SK-N-SH (cell line): ENCODE measurements at regions of chr15 and their contacts with region 1.

Region 1: GRCh38 chr15:74768771-74769342 is 13.0 kb upstream of the CSK start:
- DNase-seq: peak; percentile 84
- H3K4me3 ChIP-seq: no peak overlapping the region; a peak in 1 of 4 replicates
- H3K27ac ChIP-seq: no peak overlapping the region
- H3K4me1 ChIP-seq: peaks cover 0 to 5% of the 10 kb centered on the region in 2 experiments; a peak in 1 of 4 replicates
- H3K27me3 ChIP-seq: peaks cover 8% of the 10 kb centered on the region; the same call in 1 of the 2 replicates
- CTCF ChIP-seq: peak; percentile 87
- EP300 ChIP-seq: no peak
- RAD21 ChIP-seq: peak; percentile 88

Region 2: DNA sequence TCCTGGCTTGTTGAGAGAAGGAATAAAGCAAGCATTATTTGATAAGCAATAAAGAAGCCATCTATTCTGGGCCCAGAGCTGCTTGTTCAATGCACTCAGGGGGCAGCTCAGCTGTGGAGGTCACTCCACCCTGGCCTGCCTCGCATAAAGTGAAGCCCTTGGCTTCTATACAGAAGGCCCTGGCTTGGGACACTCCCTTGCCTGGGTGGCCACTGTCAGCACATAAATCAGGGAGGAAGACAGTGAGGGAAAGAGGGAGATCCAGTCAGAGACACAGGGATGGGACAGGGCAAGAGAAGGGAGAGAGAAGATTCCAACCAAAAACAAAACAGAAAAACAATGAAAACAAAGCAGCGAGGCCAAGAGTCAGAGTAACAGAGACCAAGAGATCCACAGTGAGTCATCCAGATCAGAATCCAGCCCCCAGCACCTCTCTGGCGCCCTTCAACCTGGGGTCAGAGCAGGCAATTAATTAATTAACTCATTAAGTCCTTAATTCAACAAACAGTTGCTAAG is 1027.5 kb before region 1 on chr15:
- CTCF ChIA-PET with region 1: no interaction called
- POLR2A ChIA-PET with region 1: no interaction called
- DNase-seq: no peak
- H3K4me3 ChIP-seq: no peak overlapping the region
- H3K27ac ChIP-seq: no peak overlapping the region
- H3K4me1 ChIP-seq: peaks cover 7 to 29% of the 10 kb centered on the region in 2 experiments; a peak in 1 of 4 replicates
- H3K27me3 ChIP-seq: no peaks in the 10 kb centered on the region
- CTCF ChIP-seq: no peak
- EP300 ChIP-seq: no peak
- RAD21 ChIP-seq: no peak

Region 3: GRCh38 chr15:74635228-74635627 is 133.6 kb before region 1 on chr15:
- CTCF ChIA-PET with region 1: interaction called, 1,109 read pairs
- POLR2A ChIA-PET with region 1: interaction called, 15 read pairs
- DNase-seq: peak; percentile 74
- H3K4me3 ChIP-seq: no peak overlapping the region
- H3K27ac ChIP-seq: no peak overlapping the region
- H3K4me1 ChIP-seq: no peaks in the 10 kb centered on the region
- H3K27me3 ChIP-seq: no peaks in the 10 kb centered on the region
- CTCF ChIP-seq: peak; percentile 92
- EP300 ChIP-seq: no peak
- RAD21 ChIP-seq: peak; percentile 94

Region 4: DNA sequence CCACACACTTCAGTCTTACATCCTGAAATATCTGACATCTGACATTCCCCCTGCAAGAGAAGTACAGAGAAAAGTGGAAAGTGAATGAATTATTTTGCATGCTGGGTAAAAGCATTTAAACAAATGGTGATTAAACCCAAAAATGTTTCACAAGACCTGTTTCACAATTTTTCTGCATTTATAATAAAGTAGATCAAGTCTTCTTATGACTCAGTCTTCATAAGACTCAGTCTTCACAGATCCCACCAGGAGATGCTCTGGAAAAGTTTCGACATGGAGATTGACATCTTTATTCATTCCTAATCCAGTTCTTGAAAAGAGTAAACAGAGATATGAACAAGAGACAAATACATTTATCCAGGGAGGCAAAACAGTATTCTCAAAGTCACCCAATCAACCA is 59.8 kb before region 1 on chr15:
- CTCF ChIA-PET with region 1: interaction called, 11 read pairs
- POLR2A ChIA-PET with region 1: no interaction called
- DNase-seq: no peak
- H3K4me3 ChIP-seq: no peak overlapping the region
- H3K27ac ChIP-seq: no peak overlapping the region
- H3K4me1 ChIP-seq: no peaks in the 10 kb centered on the region
- H3K27me3 ChIP-seq: peaks cover 22% of the 10 kb centered on the region; the same call in 1 of the 2 replicates
- CTCF ChIP-seq: no peak
- EP300 ChIP-seq: no peak
- RAD21 ChIP-seq: no peak

Region 5: DNA sequence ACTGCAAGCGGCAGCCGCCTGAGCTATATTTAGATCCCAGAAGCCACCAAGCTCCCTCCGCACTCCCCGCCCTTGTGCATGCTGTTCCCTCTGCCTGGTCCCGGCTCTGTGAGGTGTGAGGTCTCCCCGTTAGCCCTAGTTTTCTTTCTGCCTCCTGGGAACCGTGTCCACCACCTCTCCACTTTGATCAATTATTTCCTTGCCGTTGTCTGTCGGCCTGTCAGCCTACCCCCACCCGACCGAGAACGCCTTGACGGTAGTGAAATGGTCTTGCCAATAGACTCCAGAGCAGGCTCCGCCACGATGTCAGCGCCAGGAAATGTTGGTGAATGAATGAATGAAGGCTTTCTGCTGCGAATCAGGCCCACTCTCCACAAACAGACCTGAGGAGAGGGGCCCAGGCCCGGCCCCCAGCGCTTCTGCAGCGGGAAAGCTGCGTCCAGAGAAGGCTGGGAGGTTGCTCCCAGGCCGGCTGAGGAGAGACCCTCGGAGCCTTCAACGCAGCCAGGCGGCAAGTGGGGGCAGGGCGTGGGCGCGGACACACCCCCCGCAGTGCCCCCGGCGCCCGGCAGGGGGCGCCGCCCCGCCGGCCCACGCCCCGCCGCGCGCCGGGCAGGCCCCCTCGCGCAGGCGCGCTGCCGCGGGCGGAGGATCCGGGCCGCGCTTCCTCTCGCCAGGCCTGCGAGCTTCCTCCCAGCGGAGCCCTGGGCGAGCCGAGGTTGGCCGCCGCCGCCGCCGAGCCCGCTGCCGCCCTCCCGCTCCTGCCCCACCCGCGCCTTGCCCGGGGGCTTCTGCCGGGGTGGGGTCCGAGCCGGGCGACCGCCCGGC is 12.8 kb after region 1 on chr15 and contains the start of gene CSK:
- CTCF ChIA-PET with region 1: interaction called, 161 read pairs
- POLR2A ChIA-PET with region 1: interaction called, 4 read pairs
- DNase-seq: peak; percentile 99
- H3K4me3 ChIP-seq: peak within 1 kb of the TSS; percentile 85 to 97
- H3K27ac ChIP-seq: peak within 1 kb of the TSS in 1 of 2 experiments; percentile 76; a peak in 2 of 4 replicates
- H3K4me1 ChIP-seq: peaks cover 10 to 46% of the 10 kb centered on the region in 2 experiments; a peak in 2 of 4 replicates
- H3K27me3 ChIP-seq: no peaks in the 10 kb centered on the region
- CTCF ChIP-seq: peak; percentile 48
- EP300 ChIP-seq: no peak
- RAD21 ChIP-seq: no peak
- polyA plus RNA-seq, gene CSK: 34.7 and 53.1 TPM in 2 replicates

Region 6: GRCh38 chr15:74808073-74808755 is 39.4 kb after region 1 on chr15:
- CTCF ChIA-PET with region 1: interaction called, 13 read pairs
- POLR2A ChIA-PET with region 1: no interaction called
- DNase-seq: no peak
- H3K4me3 ChIP-seq: no peak overlapping the region
- H3K27ac ChIP-seq: no peak overlapping the region
- H3K4me1 ChIP-seq: no peaks in the 10 kb centered on the region
- H3K27me3 ChIP-seq: no peaks in the 10 kb centered on the region
- CTCF ChIP-seq: no peak
- EP300 ChIP-seq: no peak
- RAD21 ChIP-seq: no peak

Region 7: GRCh38 chr15:74906446-74907162 is 137.7 kb after region 1 on chr15 and contains the start of gene FAM219B:
- CTCF ChIA-PET with region 1: interaction called, 22 read pairs
- POLR2A ChIA-PET with region 1: interaction called, 4 read pairs
- DNase-seq: peak; percentile 98
- H3K4me3 ChIP-seq: peak within 1 kb of the TSS; percentile 86 to 89
- H3K27ac ChIP-seq: peak within 1 kb of the TSS; percentile 58 to 84
- H3K4me1 ChIP-seq: peaks cover 4 to 18% of the 10 kb centered on the region in 2 experiments; a peak in 3 of 4 replicates
- H3K27me3 ChIP-seq: no peaks in the 10 kb centered on the region
- CTCF ChIP-seq: no peak
- EP300 ChIP-seq: no peak
- RAD21 ChIP-seq: no peak
- polyA plus RNA-seq, gene FAM219B: 53.0 and 90.2 TPM in 2 replicates

Region 8: DNA sequence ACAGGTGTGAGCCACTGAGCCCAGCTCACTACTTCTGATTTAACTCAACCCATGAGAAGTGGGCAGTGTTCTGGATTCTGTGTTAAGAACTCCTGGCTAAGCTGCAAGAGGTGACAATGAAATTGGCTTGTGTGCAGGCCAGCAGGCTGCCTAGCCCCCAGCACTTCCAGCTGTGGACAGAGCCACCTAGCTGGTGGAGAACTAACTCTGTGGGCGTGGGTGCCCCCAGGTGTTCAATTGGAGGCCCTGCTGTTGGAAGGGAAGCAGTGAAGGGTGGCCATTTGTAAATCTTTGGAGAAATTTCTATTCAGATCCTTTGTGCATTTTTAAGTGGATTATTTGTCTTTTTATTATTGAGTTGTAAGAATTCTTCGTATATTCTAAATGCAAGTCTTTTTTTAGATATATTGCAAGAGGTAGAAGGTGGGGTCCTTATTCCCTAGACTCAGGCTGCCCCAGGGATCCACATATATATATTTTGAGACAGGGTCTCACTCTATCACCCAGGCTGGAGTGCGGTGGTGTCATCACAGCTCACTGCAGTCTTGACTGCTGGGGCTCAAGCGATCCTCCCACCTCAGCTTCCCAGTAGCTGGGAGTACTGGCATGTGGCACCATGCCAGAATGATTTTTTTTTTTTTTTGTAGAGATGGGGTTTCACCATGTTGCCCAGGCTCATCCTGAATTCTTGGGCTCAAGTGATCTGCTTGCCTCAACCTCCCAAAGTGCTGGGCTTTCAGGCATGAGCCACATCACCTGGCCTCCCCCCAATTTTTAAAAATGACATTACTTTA is 219.3 kb after region 1 on chr15:
- CTCF ChIA-PET with region 1: interaction called, 11 read pairs
- POLR2A ChIA-PET with region 1: no interaction called
- DNase-seq: peak; percentile 72
- H3K4me3 ChIP-seq: no peak overlapping the region; a peak in 1 of 4 replicates
- H3K27ac ChIP-seq: no peak overlapping the region
- H3K4me1 ChIP-seq: no peaks in the 10 kb centered on the region
- H3K27me3 ChIP-seq: no peaks in the 10 kb centered on the region
- CTCF ChIP-seq: peak; percentile 55
- EP300 ChIP-seq: no peak
- RAD21 ChIP-seq: peak; percentile 89